B cell (primary cell): ENCODE measurements at regions of chr7 and their contacts with region 1.

Region 1: DNA sequence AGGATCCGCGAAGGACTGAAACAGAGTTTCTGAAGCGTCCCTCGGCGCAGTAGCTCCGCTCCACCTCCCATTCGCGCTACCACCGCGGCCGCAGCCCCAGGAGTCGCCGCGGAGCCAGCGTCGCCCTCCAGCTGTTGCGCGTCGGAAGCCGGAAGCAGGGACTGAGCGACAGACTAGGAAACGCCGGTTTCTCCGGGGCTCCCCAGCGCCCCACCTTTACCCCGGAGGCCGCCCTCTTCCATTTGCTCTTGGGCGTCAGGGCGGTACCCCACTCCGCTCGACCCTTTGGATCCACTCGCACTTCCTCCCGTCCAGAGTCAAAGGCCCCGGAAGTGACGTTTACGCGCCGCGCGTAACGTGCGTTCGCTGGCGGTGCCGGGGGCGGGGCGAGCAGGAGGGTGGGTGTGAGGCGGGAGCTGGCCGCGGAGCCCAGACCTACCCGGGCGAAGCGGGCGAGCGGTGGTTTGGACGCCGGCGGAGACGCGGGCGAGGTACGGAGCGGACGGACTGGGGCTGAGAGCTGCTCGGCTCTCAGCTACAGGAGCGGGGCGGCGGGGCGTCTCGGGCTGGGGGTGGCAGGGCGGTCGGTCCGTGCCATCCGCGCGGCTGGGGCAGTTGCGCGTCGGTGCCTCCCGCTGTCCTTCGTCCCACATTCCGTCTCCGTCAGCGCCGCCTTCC is at the start of gene RABGEF1:
- DNase-seq: peak; percentile 98
- ATAC-seq: peak; percentile 83
- H3K4me3 ChIP-seq: peak within 1 kb of the TSS; percentile 79 to 95 (median 93)
- H3K4me3 Mint-ChIP-seq: peak within 1 kb of the TSS; percentile 95
- H3K27ac ChIP-seq: peak within 1 kb of the TSS; percentile 89 to 97
- H3K27ac Mint-ChIP-seq: peak within 1 kb of the TSS; percentile 98
- H3K4me1 ChIP-seq: peaks cover 56 to 67% of the 10 kb centered on the region in 2 donors
- H3K4me1 Mint-ChIP-seq: peaks cover 61% of the 10 kb centered on the region
- H3K27me3 ChIP-seq: no peaks in the 10 kb centered on the region
- H3K27me3 Mint-ChIP-seq: no peaks in the 10 kb centered on the region
- CTCF ChIP-seq: no peak
- total RNA-seq, gene RABGEF1: 27.9 and 29.2 TPM in 2 replicates

Region 2: GRCh38 chr7:66591799-66592596 is 148.4 kb before region 1 on chr7:
- CTCF ChIA-PET with region 1: no interaction called
- POLR2A ChIA-PET with region 1: no interaction called
- intact Hi-C with region 1: loop called (anchors 1 kb)
- DNase-seq: peak; percentile 90
- ATAC-seq: peak; percentile 98
- H3K4me3 ChIP-seq: peak overlapping the region; percentile 47 to 94 (median 81)
- H3K4me3 Mint-ChIP-seq: peak overlapping the region; percentile 100
- H3K27ac ChIP-seq: peak overlapping the region; percentile 42 to 87
- H3K27ac Mint-ChIP-seq: peak overlapping the region; percentile 99
- H3K4me1 ChIP-seq: peaks cover 13 to 27% of the 10 kb centered on the region in 2 donors
- H3K4me1 Mint-ChIP-seq: peaks cover 47% of the 10 kb centered on the region
- H3K27me3 ChIP-seq: no peaks in the 10 kb centered on the region
- H3K27me3 Mint-ChIP-seq: no peaks in the 10 kb centered on the region
- CTCF ChIP-seq: no peak

Region 3: DNA sequence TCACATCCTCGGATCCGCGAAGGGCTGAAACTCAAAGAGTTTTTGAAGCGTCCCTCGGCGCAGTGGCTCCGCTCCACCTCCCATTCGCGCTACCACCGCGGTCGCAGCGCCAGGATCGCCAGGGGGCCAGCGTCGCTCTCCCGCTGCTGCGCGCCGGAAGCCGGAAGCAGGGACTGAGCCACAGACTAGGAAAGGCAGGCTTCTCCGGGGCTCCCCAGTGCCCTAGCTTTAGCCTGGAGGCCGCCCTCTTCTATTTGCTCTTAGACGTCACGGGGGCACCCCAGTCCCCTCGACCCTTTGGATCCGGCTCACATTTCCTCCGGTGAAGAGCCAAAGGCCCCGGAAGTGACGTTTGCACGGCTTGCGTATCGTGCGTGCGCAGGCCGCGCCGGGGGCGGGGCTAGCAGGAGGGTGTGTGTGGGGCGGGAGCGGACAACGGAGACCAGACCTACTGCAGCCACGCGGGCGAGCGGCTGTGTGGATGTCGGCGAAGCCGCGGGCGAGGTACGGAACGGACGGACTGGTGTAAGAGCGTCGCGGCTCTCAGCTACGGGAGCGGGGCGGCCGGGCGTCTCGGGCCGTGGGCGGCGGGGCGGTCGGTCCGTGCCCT is 86.2 kb before region 1 on chr7:
- CTCF ChIA-PET with region 1: no interaction called
- POLR2A ChIA-PET with region 1: interaction called, 5 read pairs
- intact Hi-C with region 1: loop called (anchors 1 kb)
- DNase-seq: peak; percentile 99
- ATAC-seq: peak; percentile 92
- H3K4me3 ChIP-seq: peak overlapping the region; percentile 54 to 86 (median 83)
- H3K4me3 Mint-ChIP-seq: peak overlapping the region; percentile 98
- H3K27ac ChIP-seq: peak overlapping the region; percentile 82 to 98
- H3K27ac Mint-ChIP-seq: peak overlapping the region; percentile 99
- H3K4me1 ChIP-seq: peaks cover 9 to 16% of the 10 kb centered on the region in 2 donors
- H3K4me1 Mint-ChIP-seq: peaks cover 24% of the 10 kb centered on the region
- H3K27me3 ChIP-seq: no peaks in the 10 kb centered on the region
- H3K27me3 Mint-ChIP-seq: no peaks in the 10 kb centered on the region
- CTCF ChIP-seq: no peak

Region 4: DNA sequence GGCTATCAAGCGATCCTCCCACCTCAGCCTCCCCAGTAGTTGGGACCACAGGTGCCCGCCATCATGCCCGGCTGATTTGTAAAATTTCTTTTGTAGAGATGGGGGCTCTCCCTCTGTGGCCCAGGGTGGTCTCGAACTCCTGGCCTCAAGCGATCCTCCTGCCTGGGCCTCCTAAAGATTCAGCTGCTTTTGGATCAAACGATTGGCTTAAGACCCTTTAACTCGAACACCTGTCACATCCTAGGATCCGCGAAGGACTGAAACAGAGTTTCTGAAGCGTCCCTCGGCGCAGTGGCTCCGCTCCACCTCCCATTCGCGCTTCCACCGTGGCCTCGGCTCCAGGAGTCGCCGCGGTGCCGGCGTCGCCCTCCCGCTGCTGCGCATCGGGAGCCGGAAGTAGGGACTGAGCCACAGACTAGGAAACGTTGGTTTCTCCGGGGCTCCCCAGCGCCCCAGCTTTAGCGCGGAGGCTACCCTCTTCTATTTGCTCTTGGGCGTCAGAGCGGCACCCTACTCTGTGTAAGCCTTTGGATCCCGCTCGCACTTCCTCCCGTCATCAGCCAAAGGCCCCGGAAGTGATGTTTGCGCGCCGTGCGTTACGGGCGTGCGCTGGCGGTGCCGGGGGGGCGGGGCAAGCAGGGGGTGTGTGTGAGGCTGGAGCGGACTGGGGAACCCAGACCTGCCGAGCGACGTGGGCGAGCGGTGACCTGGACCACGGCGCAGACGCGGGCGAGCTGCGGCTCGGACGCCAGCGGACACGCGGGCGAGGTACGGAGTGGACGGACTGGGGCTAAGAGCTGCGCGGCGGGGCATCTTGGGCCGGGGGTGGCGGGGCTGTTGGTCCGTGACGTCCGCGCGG is 58.7 kb before region 1 on chr7:
- CTCF ChIA-PET with region 1: interaction called, 3 read pairs
- POLR2A ChIA-PET with region 1: interaction called, 6 read pairs
- intact Hi-C with region 1: loop called (anchors 1 kb)
- DNase-seq: peak; percentile 97
- ATAC-seq: peak; percentile 95
- H3K4me3 ChIP-seq: peak overlapping the region; percentile 62 to 99 (median 82)
- H3K4me3 Mint-ChIP-seq: peak overlapping the region; percentile 96
- H3K27ac ChIP-seq: peak overlapping the region; percentile 95 to 99
- H3K27ac Mint-ChIP-seq: peak overlapping the region; percentile 97
- H3K4me1 ChIP-seq: peaks cover 21 to 39% of the 10 kb centered on the region in 2 donors
- H3K4me1 Mint-ChIP-seq: peaks cover 35% of the 10 kb centered on the region
- H3K27me3 ChIP-seq: no peaks in the 10 kb centered on the region
- H3K27me3 Mint-ChIP-seq: no peaks in the 10 kb centered on the region
- CTCF ChIP-seq: no peak

Region 5: DNA sequence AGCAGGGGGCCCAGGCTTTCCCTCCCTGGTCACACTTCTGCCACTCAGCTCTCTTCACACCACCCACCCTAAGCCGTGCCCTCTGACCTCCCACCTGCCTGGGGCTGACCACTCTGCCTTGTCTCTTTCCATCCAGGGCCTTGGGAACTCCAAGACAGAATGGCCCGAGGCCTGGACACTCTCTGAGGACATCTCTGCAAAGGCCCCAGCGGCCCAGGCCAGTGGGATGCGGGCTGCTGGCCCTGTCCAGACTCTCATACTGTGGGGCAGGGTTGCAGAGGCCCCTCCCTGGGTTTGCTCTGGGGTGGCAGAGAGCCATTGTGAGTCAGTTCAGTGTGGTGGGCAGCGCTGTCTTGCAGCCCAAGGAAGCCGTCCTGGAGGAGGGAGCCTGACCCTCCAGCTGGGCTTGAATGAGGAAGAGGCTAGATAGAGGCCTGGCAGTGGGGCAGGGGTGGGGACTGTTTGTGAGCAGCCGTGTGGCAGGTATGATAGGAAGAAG is 39.8 kb before region 1 on chr7:
- CTCF ChIA-PET with region 1: no interaction called
- POLR2A ChIA-PET with region 1: no interaction called
- intact Hi-C with region 1: no loop called
- DNase-seq: no peak
- ATAC-seq: no peak
- H3K4me3 ChIP-seq: no peak overlapping the region
- H3K4me3 Mint-ChIP-seq: no peak overlapping the region
- H3K27ac ChIP-seq: no peak overlapping the region
- H3K27ac Mint-ChIP-seq: peak overlapping the region; percentile 59
- H3K4me1 ChIP-seq: no peaks in the 10 kb centered on the region
- H3K4me1 Mint-ChIP-seq: peaks cover 3% of the 10 kb centered on the region
- H3K27me3 ChIP-seq: no peaks in the 10 kb centered on the region
- H3K27me3 Mint-ChIP-seq: no peaks in the 10 kb centered on the region
- CTCF ChIP-seq: no peak

Region 6: DNA sequence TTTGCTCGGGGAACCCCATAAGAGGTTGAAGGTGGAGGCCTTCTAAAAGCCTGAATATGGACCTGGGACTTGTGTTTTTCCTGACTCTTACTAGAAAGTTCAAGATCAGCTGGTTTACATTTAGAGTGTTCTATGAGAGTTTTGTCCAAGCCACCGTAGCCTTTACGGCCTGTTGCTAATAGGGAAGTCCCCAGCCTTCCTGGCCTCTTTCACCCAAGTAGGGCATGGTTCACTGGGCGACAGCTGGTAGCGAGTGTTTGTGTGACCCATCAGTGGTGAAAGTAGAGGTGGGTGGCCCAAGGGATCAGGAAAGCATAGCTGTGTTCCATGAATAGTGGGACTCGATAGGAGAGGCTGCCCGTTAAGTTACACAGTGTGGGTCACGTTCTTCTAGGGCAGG is 60.1 kb after region 1 on chr7:
- CTCF ChIA-PET with region 1: no interaction called
- POLR2A ChIA-PET with region 1: no interaction called
- intact Hi-C with region 1: no loop called
- DNase-seq: peak; percentile 30
- ATAC-seq: no peak
- H3K4me3 ChIP-seq: no peak overlapping the region
- H3K4me3 Mint-ChIP-seq: no peak overlapping the region
- H3K27ac ChIP-seq: peak overlapping the region in 1 of 2 donors; percentile 53
- H3K27ac Mint-ChIP-seq: peak overlapping the region; percentile 73
- H3K4me1 ChIP-seq: peaks cover 8% of the 10 kb centered on the region in 2 donors
- H3K4me1 Mint-ChIP-seq: peaks cover 10% of the 10 kb centered on the region
- H3K27me3 ChIP-seq: no peaks in the 10 kb centered on the region
- H3K27me3 Mint-ChIP-seq: no peaks in the 10 kb centered on the region
- CTCF ChIP-seq: no peak

Region 7: GRCh38 chr7:66920769-66921395 is 180.4 kb after region 1 on chr7 and contains the start of gene TMEM248:
- CTCF ChIA-PET with region 1: no interaction called
- POLR2A ChIA-PET with region 1: interaction called, 4 read pairs
- intact Hi-C with region 1: loop called (anchors 1 kb)
- DNase-seq: peak; percentile 94
- ATAC-seq: peak; percentile 93
- H3K4me3 ChIP-seq: peak within 1 kb of the TSS; percentile 63 to 98 (median 96)
- H3K4me3 Mint-ChIP-seq: peak within 1 kb of the TSS; percentile 100
- H3K27ac ChIP-seq: peak within 1 kb of the TSS; percentile 52 to 95
- H3K27ac Mint-ChIP-seq: peak within 1 kb of the TSS; percentile 100
- H3K4me1 ChIP-seq: peaks cover 20 to 32% of the 10 kb centered on the region in 2 donors
- H3K4me1 Mint-ChIP-seq: peaks cover 37% of the 10 kb centered on the region
- H3K27me3 ChIP-seq: no peaks in the 10 kb centered on the region
- H3K27me3 Mint-ChIP-seq: no peaks in the 10 kb centered on the region
- CTCF ChIP-seq: no peak
- total RNA-seq, gene TMEM248: 114 and 120 TPM in 2 replicates